Activated naive CD4-positive, alpha-beta T cell treated with anti-CD3 and anti-CD28 coated beads for 36 hours (primary cell): ENCODE measurements at regions of chr17 and their contacts with region 1.

Region 1: DNA sequence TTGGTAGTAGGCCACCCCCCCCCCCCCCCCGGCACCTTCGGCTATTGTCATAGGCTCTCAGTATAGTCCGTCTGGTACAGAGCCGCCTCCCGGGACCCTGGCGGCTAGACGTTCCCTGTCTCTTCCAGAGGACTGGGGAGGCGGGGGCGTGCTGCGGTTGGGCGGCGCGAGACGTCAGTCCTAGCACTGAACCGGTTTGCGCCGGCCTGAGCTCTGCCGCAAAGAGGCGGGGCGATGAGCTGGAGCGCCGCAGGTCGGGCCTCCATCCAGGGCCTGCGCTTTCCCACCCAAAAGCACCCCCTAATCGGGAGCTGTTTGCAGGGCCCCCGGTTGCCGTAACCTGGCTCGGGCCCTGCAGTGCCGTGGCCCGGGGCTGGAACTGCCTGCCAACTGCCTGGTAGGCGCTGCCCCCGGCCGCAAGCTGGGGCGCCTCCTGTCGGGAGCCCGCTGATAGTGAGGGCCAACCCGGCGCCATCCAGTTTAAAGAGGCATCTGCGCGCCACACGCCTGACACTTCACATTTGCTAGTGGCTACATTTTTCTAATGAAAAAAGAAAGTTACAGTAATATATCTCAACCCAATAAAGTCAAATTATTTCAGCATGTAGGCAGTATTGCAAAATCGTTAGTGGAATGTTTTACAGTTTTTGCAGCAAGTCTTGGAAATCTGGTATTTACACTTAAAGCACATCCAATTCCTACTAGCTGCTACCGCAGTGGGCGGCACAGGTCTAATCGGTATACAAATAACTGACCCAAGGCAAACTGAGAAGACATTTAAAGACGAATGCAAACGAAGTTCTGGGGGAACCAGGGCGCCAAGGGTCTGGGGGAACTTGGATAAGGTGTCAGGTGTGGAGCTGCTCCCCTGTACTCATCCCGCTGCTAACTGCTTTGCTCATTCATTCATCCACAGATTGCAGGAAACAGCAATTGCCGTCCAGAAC is 748 bp upstream of the USP22 start:
- DNase-seq: peak; percentile 98
- H3K4me3 Mint-ChIP-seq: peak overlapping the region; percentile 76
- H3K27ac Mint-ChIP-seq: peak overlapping the region; percentile 95
- H3K4me1 Mint-ChIP-seq: peaks cover 28% of the 10 kb centered on the region
- H3K27me3 Mint-ChIP-seq: no peaks in the 10 kb centered on the region

Region 2: DNA sequence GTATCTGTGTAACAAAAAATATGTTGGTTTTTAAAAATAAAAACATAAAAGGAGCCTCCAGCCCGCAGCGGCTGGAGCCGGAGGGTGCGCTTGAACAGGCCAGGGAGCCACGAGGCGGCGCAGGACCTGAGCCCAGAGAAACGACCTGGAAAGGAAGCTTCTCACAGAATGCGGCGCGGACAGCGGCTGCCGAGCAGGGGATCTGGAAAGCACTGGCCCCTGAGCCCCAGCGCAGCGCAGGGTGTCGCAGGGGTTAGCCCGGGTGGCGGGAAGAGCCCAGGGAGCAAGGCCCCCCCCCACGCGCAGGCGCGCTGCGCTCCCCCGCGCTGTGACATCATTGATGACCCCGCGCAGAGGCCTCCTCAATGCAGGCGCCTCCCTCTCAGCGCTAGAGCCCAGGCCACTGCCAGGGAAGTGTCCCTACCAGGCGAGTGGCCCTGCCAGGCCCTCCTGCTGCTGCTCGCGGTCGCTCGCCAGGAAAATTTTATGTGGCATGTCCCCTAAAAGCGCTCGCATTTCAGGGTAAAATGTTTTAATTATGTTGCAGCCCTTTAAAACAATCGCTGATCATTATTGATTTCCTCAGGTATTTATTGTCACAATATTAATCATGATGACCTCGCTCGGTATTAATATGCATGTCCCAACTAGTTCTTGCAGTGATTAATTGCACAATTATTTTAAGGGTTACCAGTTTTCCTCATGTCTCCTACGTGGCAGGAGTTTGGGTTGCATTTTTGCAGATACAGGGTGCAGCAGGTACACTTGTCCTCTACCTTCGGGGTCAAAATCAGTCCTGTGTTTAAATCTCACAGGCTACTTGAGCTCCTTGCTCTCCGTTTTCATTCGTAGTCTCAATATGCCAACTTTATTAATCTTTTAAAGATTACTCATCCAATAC is 134.9 kb before region 1 on chr17:
- CTCF ChIA-PET with region 1: no interaction called
- intact Hi-C with region 1: loop called (anchors 1 kb)
- DNase-seq: peak; percentile 88
- H3K4me3 Mint-ChIP-seq: peak overlapping the region; percentile 78
- H3K27ac Mint-ChIP-seq: peak overlapping the region; percentile 65
- H3K4me1 Mint-ChIP-seq: peaks cover 5% of the 10 kb centered on the region
- H3K27me3 Mint-ChIP-seq: peaks cover 6% of the 10 kb centered on the region

Region 3: GRCh38 chr17:21098934-21099689 is 55.6 kb after region 1 on chr17:
- CTCF ChIA-PET with region 1: interaction called, 25 read pairs
- intact Hi-C with region 1: loop called (anchors 1 kb)
- DNase-seq: peak; percentile 91
- H3K4me3 Mint-ChIP-seq: peak overlapping the region; percentile 90
- H3K27ac Mint-ChIP-seq: peak overlapping the region; percentile 89
- H3K4me1 Mint-ChIP-seq: no peaks in the 10 kb centered on the region
- H3K27me3 Mint-ChIP-seq: no peaks in the 10 kb centered on the region

Region 4: GRCh38 chr17:21214015-21214776 is 170.6 kb after region 1 on chr17 and contains the start of gene TMEM11:
- CTCF ChIA-PET with region 1: no interaction called
- intact Hi-C with region 1: loop called (anchors 1 kb)
- DNase-seq: peak; percentile 95
- H3K4me3 Mint-ChIP-seq: peak within 1 kb of the TSS; percentile 91
- H3K27ac Mint-ChIP-seq: peak within 1 kb of the TSS; percentile 91
- H3K4me1 Mint-ChIP-seq: peaks cover 65% of the 10 kb centered on the region
- H3K27me3 Mint-ChIP-seq: no peaks in the 10 kb centered on the region
- total RNA-seq, gene TMEM11: 23.6 to 28.2 TPM

Region 5: DNA sequence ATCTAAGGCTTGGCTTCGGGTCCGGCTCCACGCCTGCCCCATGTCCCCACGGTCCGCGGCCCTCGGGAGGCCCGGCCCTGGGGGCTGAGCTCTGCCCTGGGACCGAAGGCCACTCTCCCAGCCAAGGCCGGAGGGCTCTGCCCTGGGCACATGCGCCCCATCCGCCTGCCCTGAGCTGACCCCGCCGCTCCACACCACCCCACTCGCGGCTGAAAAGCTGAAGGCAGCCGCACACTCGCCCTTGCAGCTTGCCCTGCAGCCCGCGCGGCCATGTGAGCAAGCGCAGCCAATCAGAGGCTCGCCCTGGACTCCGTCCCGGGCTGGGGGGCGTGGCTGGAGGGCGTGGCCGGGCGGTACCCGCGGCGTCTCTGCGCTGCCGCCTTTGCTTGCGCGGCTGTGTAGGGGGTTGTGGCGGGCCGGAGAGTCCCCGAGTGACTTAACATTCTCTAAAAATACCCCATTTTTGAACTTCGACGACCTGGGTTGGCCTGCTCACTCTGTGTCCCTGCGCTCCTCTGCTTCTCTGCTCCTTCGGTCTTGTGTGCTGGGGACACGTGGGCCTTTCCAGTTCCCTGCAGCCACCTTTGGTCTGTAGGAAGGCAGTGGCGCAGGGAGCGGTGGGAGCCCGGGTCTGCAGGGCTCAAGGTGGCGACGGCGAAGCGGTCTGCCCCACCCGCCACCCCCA is 232.2 kb after region 1 on chr17:
- CTCF ChIA-PET with region 1: no interaction called
- intact Hi-C with region 1: loop called (anchors 1 kb)
- DNase-seq: peak; percentile 96
- H3K4me3 Mint-ChIP-seq: peak overlapping the region; percentile 78
- H3K27ac Mint-ChIP-seq: peak overlapping the region; percentile 77
- H3K4me1 Mint-ChIP-seq: peaks cover 42% of the 10 kb centered on the region
- H3K27me3 Mint-ChIP-seq: no peaks in the 10 kb centered on the region

Region 6: DNA sequence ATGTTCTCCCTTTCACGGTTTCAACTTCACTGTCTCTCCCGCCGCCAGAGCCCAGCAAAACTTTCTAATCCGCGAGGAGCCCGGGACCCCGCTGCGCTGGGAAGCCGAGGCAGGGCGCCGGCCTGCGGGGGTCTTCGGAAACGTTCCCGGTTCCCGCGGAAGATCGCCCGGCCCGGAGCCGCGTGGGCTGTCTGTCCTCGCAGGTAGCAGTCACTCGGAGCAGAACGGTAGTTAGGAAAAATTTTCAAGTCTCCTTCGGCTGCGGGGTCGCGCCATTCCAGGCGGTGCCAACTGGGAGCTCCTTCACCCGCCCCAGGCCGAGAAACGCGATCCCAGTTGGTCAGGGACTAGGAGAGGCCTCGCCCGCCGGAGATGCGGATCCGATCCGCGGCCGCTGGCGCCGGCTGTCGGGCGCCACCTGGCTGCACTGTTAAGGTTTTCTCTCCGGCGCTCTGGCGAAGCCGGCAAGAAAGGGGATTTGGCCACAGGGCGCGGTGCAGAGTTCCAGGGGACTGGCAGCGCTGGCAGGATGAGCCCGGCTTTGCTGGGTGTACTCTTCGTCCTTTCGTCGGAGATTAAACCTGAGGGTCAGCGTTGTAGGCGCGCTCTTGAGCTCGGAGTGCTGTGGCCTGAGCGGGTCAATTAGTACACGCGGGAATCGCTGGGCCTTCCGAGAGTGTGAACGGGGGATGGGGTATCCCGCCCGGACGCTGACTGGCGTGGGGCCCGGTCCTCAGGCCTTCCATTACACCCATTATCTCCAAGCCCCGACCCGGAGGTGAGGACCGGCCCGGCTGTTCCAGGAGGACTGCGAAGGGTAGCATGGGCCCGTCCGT is 468.0 kb after region 1 on chr17:
- CTCF ChIA-PET with region 1: no interaction called
- intact Hi-C with region 1: loop called (anchors 5 kb)
- DNase-seq: peak; percentile 73
- H3K4me3 Mint-ChIP-seq: peak overlapping the region; percentile 69
- H3K27ac Mint-ChIP-seq: no peak overlapping the region
- H3K4me1 Mint-ChIP-seq: peaks cover 9% of the 10 kb centered on the region
- H3K27me3 Mint-ChIP-seq: peaks cover 30% of the 10 kb centered on the region